Left colon (tissue), 2 donors: ENCODE measurements at regions of chr3 and their contacts with region 1.

Region 1: GRCh38 chr3:61561374-61562041 is at the start of gene PTPRG:
- DNase-seq: peak; percentile 87 to 89
- ATAC-seq: peak; percentile 82
- total RNA-seq, gene PTPRG: 26.0 to 33.4 TPM

Region 2: GRCh38 chr3:61821823-61822251 is 260.3 kb after region 1 on chr3:
- intact Hi-C with region 1: loop called in 1 of 2 experiments (anchors 10 kb)
- DNase-seq: no peak
- ATAC-seq: no peak

Region 3: DNA sequence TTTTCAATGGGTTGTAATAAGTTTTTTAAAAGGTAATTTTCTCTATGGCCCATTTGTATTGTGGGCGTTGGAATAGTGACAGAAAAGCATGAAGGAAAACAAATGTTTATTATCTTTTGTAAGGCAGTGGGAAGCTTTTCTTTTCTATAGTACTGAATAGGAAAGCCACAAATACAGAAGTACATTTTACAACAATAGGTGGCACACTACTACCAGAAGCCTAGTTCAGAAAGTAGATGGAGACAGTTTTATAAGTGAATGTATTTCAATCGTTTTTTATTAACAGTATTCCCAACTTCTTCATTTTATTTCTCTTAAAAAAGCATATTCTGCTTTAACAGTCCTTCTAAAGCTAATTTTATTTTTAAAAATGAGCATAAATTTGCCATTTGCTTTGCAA is 296.5 kb after region 1 on chr3:
- intact Hi-C with region 1: loop called in 1 of 2 experiments (anchors 10 kb)
- DNase-seq: no peak
- ATAC-seq: peak; percentile 69

Region 4: GRCh38 chr3:62188681-62189383 is 627.3 kb after region 1 on chr3:
- intact Hi-C with region 1: loop called in 1 of 2 experiments (anchors 10 kb)
- DNase-seq: peak; percentile 34 to 81
- ATAC-seq: peak; percentile 86